ENCODE measurements at regions of chr7 and their contacts with region 1.

Region 1: DNA sequence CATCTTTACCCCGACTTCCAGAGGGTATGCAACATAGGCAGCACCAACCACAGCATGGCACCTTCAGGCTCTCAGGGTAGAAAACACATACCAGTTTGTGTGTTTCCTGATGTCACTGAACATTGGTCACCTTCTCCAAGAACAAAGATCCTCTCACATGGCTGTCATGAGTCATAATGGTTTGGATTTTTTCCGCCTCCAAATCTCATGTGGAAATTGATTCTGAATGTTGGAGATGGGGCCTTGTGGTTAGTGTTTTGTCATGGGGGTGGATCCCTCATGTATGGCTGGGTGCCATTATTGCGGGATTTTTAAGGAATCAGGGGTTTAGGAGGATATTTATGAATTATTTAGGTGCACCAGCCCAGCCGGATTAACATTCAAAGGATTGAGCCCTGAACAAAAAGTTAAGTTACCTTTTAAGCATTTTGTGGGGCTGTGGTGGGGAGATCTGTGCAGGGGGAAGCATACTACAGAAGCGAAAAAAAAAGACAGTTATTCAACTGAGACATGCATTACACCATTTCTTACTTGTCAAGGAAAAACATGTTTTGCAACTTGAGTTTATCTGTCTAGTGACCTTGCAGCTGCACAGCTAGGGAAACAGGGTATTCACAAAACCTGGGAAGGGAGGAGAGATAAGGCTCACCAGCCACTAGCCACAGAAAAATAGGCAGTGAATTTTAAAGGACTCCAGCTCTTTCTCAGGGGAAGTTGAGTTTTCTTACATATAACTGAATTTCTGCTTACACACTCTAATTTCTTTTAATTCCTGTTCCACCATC is 774.1 kb upstream of the AUTS2 start:
- DNase-seq: no peak
- H3K4me3 ChIP-seq: no peak overlapping the region
- H3K27ac ChIP-seq: no peak overlapping the region
- H3K4me1 ChIP-seq: no peaks in the 10 kb centered on the region
- H3K27me3 ChIP-seq: no peaks in the 10 kb centered on the region
- CTCF ChIP-seq: no peak
- POLR2A ChIP-seq: no peak

Region 2: GRCh38 chr7:68088879-68089278 is 735.3 kb before region 1 on chr7:
- intact Hi-C with region 1: loop called (anchors 10 kb)
- DNase-seq: no peak
- H3K4me3 ChIP-seq: no peak overlapping the region
- H3K27ac ChIP-seq: no peak overlapping the region
- H3K4me1 ChIP-seq: no peaks in the 10 kb centered on the region
- H3K27me3 ChIP-seq: no peaks in the 10 kb centered on the region
- CTCF ChIP-seq: no peak
- POLR2A ChIP-seq: no peak

Region 3: DNA sequence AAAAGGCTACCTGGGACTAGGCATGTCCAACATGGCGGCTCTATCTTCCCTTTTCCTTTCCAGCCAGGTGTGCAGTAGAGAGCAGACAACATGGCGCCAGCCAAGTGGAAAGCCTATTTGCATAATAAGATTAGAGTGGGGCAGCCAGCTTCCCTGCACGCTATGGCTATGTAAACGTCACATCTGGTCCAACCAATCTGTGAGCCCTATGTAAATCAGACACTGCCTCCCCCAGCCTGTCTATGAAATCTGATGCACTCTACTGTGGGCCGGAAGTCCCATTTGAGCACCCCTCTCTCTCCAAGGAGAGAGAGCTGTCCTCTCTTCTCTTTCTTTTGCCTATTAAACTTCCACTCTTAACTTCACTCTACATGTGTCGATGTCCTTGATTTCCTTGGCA is 210.8 kb before region 1 on chr7:
- intact Hi-C with region 1: no loop called
- DNase-seq: no peak
- H3K4me3 ChIP-seq: no peak overlapping the region
- H3K27ac ChIP-seq: no peak overlapping the region
- H3K4me1 ChIP-seq: no peaks in the 10 kb centered on the region
- H3K27me3 ChIP-seq: no peaks in the 10 kb centered on the region
- CTCF ChIP-seq: no peak
- POLR2A ChIP-seq: no peak